Activated CD4-positive, alpha-beta memory T cell treated with anti-CD3 and anti-CD28 coated beads for 36 hours (primary cell): ENCODE measurements at regions of chr4 and their contacts with region 1.

Region 1: GRCh38 chr4:112199040-112199439 is 32.5 kb upstream of the AP1AR start:
- DNase-seq: no peak
- H3K4me3 Mint-ChIP-seq: no peak overlapping the region
- H3K27ac Mint-ChIP-seq: no peak overlapping the region
- H3K4me1 Mint-ChIP-seq: peaks cover 19% of the 10 kb centered on the region
- H3K27me3 Mint-ChIP-seq: peaks cover 4% of the 10 kb centered on the region

Region 2: DNA sequence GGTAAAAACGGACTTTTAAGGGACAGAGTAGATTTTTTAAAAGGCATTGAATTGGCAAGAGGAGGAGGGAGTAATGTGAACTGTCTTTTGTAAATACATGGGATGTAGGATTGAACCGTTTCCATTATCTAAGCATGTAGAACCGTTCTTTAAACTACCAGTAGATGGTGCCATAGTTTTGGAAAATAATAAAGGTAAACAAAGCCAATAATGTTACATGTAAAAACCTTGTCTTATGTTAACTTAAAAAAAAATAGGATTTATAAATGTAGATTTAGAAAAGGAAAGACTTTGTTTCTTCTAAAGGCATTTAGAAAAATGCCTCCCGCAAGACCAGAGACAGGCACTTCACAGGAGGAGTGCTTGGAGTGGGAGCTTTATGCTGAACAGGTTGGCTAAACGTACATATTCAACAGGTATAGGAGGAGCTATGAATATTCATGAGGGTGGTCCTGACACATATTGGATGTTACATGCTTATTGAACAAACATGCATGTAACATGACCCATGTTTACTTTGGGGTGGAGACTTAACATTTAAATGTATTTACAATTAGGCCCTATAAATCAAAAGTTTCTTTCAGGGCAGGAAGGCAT is 99.2 kb before region 1 on chr4:
- CTCF ChIA-PET with region 1: interaction called, 5 read pairs
- POLR2A ChIA-PET with region 1: no interaction called
- intact Hi-C with region 1: loop called (anchors 5 kb)
- DNase-seq: no peak
- H3K4me3 Mint-ChIP-seq: no peak overlapping the region
- H3K27ac Mint-ChIP-seq: no peak overlapping the region
- H3K4me1 Mint-ChIP-seq: peaks cover 1% of the 10 kb centered on the region
- H3K27me3 Mint-ChIP-seq: peaks cover 2% of the 10 kb centered on the region

Region 3: GRCh38 chr4:112127803-112128202 is 71.2 kb before region 1 on chr4:
- CTCF ChIA-PET with region 1: no interaction called
- POLR2A ChIA-PET with region 1: no interaction called
- intact Hi-C with region 1: loop called (anchors 1 kb)
- DNase-seq: no peak
- H3K4me3 Mint-ChIP-seq: no peak overlapping the region
- H3K27ac Mint-ChIP-seq: no peak overlapping the region
- H3K4me1 Mint-ChIP-seq: peaks cover 12% of the 10 kb centered on the region
- H3K27me3 Mint-ChIP-seq: peaks cover 13% of the 10 kb centered on the region

Region 4: GRCh38 chr4:112172180-112172579 is 26.9 kb before region 1 on chr4:
- CTCF ChIA-PET with region 1: no interaction called
- POLR2A ChIA-PET with region 1: no interaction called
- intact Hi-C with region 1: no loop called
- DNase-seq: no peak
- H3K4me3 Mint-ChIP-seq: no peak overlapping the region
- H3K27ac Mint-ChIP-seq: no peak overlapping the region
- H3K4me1 Mint-ChIP-seq: peaks cover 35% of the 10 kb centered on the region
- H3K27me3 Mint-ChIP-seq: no peaks in the 10 kb centered on the region

Region 5: DNA sequence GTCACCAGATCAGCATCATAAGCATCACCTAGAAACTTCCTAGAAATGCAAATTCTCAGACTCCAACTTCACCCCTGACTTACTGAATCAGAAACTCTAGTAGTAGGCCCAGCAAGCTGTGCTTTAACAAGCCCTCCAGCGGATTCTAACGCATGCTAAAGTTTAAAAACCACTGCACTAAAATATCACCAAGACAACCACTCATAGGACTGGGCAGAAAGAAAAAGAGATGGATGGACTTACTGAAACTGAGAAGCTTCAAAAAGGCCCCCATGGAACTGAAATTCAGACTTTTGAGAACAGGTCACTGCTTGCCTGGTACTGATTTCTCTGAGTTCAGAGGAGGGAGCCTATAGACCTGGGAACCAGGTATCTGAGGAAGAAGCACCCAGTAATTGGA is 13.7 kb before region 1 on chr4:
- CTCF ChIA-PET with region 1: no interaction called
- POLR2A ChIA-PET with region 1: no interaction called
- intact Hi-C with region 1: loop called (anchors 1 kb)
- DNase-seq: no peak
- H3K4me3 Mint-ChIP-seq: no peak overlapping the region
- H3K27ac Mint-ChIP-seq: no peak overlapping the region
- H3K4me1 Mint-ChIP-seq: peaks cover 30% of the 10 kb centered on the region
- H3K27me3 Mint-ChIP-seq: no peaks in the 10 kb centered on the region

Region 6: DNA sequence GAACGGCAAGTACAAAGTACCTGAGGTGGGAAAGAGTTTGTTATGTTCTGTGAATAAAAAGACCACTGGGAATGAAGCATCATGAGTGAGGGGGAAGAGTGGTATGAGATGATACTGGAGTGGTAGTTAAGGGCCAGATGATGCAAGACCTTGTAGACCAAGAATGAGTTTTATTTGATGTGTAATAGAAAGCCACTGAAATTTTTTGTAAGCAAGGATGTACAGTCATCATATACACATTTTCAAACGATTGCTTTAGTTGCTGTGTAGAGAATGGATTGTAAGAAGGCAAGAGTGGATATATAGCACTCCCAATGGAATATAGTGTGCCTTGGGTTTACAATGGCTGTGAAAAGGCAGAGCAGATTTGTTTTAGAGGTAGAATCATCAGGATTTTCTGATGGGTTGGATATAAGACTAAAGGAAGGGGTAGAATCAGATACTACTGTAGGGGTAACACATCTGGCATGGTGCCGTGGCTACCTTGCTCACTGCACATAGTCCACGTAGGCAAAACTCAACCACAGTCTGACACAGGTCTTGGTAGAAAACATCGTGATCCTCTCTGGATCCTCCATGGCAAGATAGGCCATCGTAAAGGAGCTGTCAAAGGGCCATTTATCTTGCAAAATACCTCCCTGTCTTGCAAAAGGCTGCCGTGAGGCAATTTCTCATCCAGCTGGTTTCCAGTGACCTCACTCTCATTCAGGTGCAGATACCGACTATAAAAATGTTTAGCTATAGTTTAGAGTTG is 71.8 kb after region 1 on chr4:
- CTCF ChIA-PET with region 1: no interaction called
- POLR2A ChIA-PET with region 1: no interaction called
- intact Hi-C with region 1: loop called (anchors 1 kb)
- DNase-seq: no peak
- H3K4me3 Mint-ChIP-seq: no peak overlapping the region
- H3K27ac Mint-ChIP-seq: peak overlapping the region; percentile 77
- H3K4me1 Mint-ChIP-seq: peaks cover 60% of the 10 kb centered on the region
- H3K27me3 Mint-ChIP-seq: no peaks in the 10 kb centered on the region

Region 7: DNA sequence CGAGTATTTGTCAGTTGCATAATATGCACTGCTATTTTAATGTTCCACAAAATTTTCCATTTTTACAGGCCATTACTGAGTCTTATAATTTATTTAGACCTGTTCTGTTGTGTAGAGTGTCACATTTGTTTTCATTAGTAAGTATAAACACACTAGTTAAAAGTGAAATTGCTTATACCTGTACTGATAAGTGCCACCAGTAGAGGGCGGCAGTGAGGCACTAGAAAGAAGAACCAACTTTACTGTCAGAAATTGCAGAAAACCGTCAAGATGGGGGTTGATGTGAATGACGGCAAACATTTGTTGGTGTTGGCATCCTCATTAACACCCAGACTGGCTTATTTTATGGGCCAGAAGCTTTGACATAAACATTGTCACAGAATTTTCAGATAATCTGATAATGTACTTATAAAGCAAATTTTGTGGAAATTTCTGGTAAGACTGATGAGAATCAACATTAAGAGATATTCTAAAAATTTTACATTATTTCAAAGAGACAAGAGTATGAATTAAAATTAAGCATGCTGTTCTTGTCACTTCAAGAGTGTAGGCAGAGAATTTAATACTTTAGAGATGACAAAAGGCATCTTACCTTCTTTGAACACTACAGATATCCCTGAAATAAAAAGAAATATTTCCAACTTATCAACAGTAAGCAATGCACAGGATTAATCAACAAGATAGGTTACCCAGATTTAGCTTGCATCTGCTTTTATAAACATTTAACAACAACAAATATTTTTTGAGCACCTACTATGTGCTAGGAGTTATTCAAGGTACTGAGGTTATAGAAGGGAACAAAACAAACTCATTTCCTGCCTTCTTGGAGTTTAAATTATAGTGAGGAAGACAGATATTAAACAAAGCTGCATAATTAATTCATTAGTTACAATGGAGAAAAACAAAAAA is 123.0 kb after region 1 on chr4:
- CTCF ChIA-PET with region 1: no interaction called
- POLR2A ChIA-PET with region 1: no interaction called
- intact Hi-C with region 1: loop called (anchors 5 kb)
- DNase-seq: peak; percentile 82
- H3K4me3 Mint-ChIP-seq: no peak overlapping the region
- H3K27ac Mint-ChIP-seq: no peak overlapping the region
- H3K4me1 Mint-ChIP-seq: peaks cover 22% of the 10 kb centered on the region
- H3K27me3 Mint-ChIP-seq: no peaks in the 10 kb centered on the region

Region 8: DNA sequence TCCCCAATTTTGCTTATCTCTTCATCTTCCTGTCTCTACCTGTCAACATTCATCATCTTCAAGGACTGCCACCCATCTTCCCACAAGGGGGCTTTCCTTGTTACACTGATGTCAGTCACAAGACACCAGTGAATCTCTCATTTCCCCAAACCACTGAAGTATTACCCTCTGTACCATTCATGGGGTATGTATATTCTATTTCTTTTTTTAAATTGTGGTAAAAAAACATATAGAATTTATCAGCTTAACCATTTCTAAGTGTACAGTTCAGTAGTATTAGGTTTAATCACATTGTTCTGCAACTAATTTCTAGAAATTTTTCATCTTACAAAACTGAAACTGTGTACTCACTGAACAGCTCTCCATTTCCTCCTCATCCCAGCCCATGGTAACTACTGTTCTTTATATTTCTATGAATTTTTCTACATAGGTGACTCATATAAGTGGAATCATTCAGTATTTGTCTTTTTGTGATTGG is 536.5 kb after region 1 on chr4:
- CTCF ChIA-PET with region 1: no interaction called
- POLR2A ChIA-PET with region 1: no interaction called
- intact Hi-C with region 1: loop called (anchors 5 kb)
- DNase-seq: no peak
- H3K4me3 Mint-ChIP-seq: no peak overlapping the region
- H3K27ac Mint-ChIP-seq: no peak overlapping the region
- H3K4me1 Mint-ChIP-seq: peaks cover 16% of the 10 kb centered on the region
- H3K27me3 Mint-ChIP-seq: no peaks in the 10 kb centered on the region